Transverse colon (tissue), 4 donors: ENCODE measurements at regions of chr15 and their contacts with region 1.

Region 1: GRCh38 chr15:66841953-66842681 is 140.1 kb downstream of the SMAD6 start:
- DNase-seq: peak; percentile 83
- H3K4me3 ChIP-seq: peak overlapping the region; percentile 0 to 53 (median 49)
- H3K27ac ChIP-seq: peak overlapping the region; percentile 87 to 90 (median 88)
- H3K4me1 ChIP-seq: peaks cover 0 to 15% (median 12%) of the 10 kb centered on the region in 4 donors
- H3K27me3 ChIP-seq: no peaks in the 10 kb centered on the region
- CTCF ChIP-seq: no peak
- EP300 ChIP-seq: no peak
- POLR2A ChIP-seq: no peak

Region 2: DNA sequence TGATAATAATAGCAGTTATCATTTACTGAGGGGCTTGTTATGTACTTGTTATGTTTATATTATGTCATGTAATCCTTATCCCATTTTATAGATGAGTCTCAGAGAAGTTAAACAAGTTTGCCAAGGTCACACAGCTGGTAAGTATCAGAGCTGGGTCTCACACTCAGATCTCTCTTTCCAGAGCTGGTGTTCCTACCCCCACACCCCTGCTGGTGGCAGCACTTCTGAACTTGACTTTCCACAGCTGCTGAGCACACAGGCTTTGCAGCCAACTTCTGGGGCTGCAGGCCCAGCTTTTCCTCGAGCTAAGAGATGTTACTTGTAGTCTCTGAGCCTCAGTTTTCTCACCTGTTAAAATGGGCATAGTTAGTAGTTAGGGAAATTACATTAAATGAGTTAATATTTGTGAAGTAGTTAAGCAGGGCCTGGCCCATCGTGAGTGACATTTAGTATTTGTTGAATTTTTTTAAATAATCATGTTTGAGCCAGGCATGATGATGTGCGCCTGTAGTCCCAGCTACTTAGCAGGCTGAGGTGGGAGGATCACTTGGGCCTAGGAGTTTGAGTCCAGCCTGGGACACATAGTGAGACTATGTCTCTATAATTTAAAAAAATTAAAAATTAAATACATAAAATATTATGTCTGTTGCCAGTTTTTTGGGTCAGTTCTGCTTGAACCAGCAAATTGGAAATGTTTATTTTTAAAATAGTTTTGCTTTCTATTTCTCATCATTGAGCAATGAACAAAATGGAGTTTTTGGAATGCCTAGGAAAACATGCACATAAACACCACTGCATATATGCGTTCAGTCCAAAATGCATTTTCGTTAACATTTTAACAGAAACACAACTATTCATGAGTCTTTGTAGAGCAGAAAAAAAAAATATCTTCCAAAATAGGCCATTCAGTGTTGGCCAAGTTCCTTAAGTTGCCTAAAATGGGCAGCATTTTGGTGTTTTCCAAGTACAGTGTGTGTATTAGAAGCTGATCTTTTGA is 52.8 kb before region 1 on chr15:
- in situ Hi-C with region 1: loop called in 1 of 4 experiments (anchors 10 kb)
- intact Hi-C with region 1: no loop called
- DNase-seq: peak; percentile 38
- H3K4me3 ChIP-seq: no peak overlapping the region
- H3K27ac ChIP-seq: peak overlapping the region; percentile 35 to 57 (median 48)
- H3K4me1 ChIP-seq: peaks cover 0 to 12% (median 2%) of the 10 kb centered on the region in 4 donors
- H3K27me3 ChIP-seq: no peaks in the 10 kb centered on the region
- CTCF ChIP-seq: peak; percentile 15 to 51 (median 27)
- EP300 ChIP-seq: no peak
- POLR2A ChIP-seq: no peak

Region 3: GRCh38 chr15:66803182-66803729 is 38.9 kb before region 1 on chr15:
- in situ Hi-C with region 1: no loop called
- intact Hi-C with region 1: no loop called
- DNase-seq: peak; percentile 89
- H3K4me3 ChIP-seq: no peak overlapping the region
- H3K27ac ChIP-seq: peak overlapping the region; percentile 71 to 81 (median 74)
- H3K4me1 ChIP-seq: peaks cover 17 to 20% (median 19%) of the 10 kb centered on the region in 4 donors
- H3K27me3 ChIP-seq: no peaks in the 10 kb centered on the region
- CTCF ChIP-seq: no peak
- EP300 ChIP-seq: no peak
- POLR2A ChIP-seq: no peak

Region 4: DNA sequence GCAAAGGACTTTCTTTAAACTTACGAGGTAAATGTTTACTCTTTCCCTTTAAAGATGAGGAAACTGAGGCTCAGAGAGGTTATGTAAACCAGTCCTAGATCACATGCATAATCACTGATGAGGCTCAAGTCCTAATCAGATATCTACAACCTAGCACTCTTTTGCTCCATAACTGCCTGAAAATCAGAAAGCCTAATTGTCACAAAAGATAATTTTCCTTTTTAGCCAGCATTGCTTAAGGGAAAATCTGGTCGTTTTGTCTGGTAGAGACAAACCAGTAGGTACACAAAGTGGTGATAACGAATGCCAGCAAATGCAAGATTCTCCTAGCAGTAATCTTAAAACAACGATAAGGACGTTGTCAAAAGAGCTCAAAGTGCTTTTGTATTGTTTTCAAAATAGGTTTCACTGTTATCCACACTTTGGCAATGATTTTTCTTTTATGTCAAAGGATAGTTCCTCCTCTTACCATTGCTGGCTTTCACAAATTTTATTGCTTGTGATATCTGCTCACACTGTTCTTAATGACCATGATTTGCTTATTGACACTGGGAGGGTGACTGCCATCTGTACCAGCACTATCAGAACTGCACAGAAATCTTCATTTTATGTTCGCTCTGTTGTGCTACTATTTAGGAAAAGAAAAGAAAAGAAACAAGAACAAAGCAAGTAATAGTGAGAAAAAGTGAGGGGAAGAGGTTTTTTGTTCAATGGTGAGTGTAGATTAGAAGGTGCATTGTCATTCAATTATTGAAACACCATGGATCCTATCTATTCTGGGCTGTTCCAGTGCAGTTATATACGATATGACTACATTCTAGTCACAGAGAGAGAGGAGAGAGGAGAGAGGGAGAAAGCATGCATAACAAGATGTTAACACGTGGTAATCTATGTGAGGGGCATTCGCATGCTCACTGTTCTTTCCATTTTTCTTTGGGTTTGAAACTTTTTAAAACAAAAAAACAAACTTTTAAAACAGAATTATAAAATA is 426.1 kb after region 1 on chr15:
- in situ Hi-C with region 1: no loop called
- intact Hi-C with region 1: no loop called
- DNase-seq: no peak
- H3K4me3 ChIP-seq: no peak overlapping the region
- H3K27ac ChIP-seq: peak overlapping the region; percentile 18 to 67 (median 46)
- H3K4me1 ChIP-seq: peaks cover 0 to 21% (median 7%) of the 10 kb centered on the region in 4 donors
- H3K27me3 ChIP-seq: no peaks in the 10 kb centered on the region
- CTCF ChIP-seq: no peak
- EP300 ChIP-seq: no peak
- POLR2A ChIP-seq: no peak